B cell (primary cell): ENCODE measurements at regions of chr4 and their contacts with region 1.

Region 1: GRCh38 chr4:81427344-81427821 is 44.3 kb downstream of the RASGEF1B start:
- DNase-seq: no peak
- ATAC-seq: no peak
- H3K4me3 ChIP-seq: no peak overlapping the region
- H3K4me3 Mint-ChIP-seq: no peak overlapping the region
- H3K27ac ChIP-seq: no peak overlapping the region
- H3K27ac Mint-ChIP-seq: no peak overlapping the region
- H3K4me1 ChIP-seq: peaks cover 0 to 6% of the 10 kb centered on the region in 2 donors
- H3K4me1 Mint-ChIP-seq: peaks cover 12% of the 10 kb centered on the region
- H3K27me3 ChIP-seq: no peaks in the 10 kb centered on the region
- H3K27me3 Mint-ChIP-seq: no peaks in the 10 kb centered on the region
- CTCF ChIP-seq: no peak

Region 2: DNA sequence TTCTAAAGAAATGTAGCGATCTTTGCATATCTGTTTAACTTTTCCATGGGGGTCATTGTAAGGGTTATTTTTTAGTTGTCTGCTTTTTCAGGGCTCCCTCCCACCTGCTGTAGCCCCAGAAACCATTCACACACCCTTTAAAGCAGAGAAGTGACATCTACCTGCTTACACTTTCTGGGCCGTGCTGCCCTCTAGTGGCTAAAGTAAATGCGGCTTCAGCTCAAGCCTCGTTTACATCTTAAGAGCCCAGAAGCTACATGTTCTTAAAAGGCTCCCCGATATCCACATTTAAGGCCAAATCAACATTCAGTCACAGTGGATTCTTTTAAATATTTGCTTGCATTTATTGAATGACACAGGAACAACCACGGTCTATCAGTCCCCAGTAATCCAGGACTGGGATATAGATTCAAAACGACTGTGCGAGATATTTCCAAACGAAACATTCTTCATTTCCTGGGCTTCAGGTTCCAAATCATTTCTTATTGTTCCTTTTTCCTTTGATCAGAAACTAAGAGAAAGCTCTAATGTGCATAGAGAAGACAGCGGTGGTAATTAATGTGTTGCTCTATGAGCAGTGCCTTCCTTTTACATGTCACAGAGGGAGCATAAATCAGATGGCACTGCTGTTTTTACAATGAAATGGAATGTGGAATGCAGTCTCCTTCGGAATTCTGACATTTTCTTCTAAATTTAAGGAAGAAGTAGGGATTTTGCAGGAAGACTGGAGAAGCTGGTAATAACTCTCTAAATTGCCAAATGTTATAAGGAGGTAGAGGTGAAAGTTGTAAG is 75.5 kb before region 1 on chr4:
- CTCF ChIA-PET with region 1: no interaction called
- POLR2A ChIA-PET with region 1: no interaction called
- intact Hi-C with region 1: no loop called
- DNase-seq: peak; percentile 73
- ATAC-seq: peak; percentile 60
- H3K4me3 ChIP-seq: no peak overlapping the region
- H3K4me3 Mint-ChIP-seq: no peak overlapping the region
- H3K27ac ChIP-seq: no peak overlapping the region
- H3K27ac Mint-ChIP-seq: no peak overlapping the region
- H3K4me1 ChIP-seq: no peaks in the 10 kb centered on the region
- H3K4me1 Mint-ChIP-seq: no peaks in the 10 kb centered on the region
- H3K27me3 ChIP-seq: no peaks in the 10 kb centered on the region
- H3K27me3 Mint-ChIP-seq: peaks cover 14% of the 10 kb centered on the region
- CTCF ChIP-seq: peak; percentile 93

Region 3: DNA sequence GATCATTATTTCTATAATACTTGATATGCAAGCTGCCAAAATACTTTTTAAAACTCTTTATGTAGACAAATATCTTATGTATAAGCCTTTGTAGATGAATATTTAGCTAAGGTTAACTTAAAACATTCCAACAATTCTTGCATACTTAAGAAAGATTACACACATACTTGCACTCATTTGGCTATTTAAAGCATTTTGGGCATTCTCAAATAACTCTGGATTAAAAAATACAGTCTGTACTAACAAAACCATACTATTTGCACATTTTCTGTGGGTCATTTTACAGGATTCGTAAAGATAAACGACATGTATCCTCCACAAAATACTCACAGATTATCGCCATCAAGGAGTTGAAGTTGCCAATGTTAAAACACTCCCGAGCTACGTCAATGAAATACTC is 17.8 kb after region 1 on chr4:
- CTCF ChIA-PET with region 1: interaction called, 4 read pairs
- POLR2A ChIA-PET with region 1: no interaction called
- intact Hi-C with region 1: loop called (anchors 2 kb)
- DNase-seq: no peak
- ATAC-seq: no peak
- H3K4me3 ChIP-seq: no peak overlapping the region
- H3K4me3 Mint-ChIP-seq: no peak overlapping the region
- H3K27ac ChIP-seq: no peak overlapping the region
- H3K27ac Mint-ChIP-seq: no peak overlapping the region
- H3K4me1 ChIP-seq: no peaks in the 10 kb centered on the region
- H3K4me1 Mint-ChIP-seq: no peaks in the 10 kb centered on the region
- H3K27me3 ChIP-seq: no peaks in the 10 kb centered on the region
- H3K27me3 Mint-ChIP-seq: no peaks in the 10 kb centered on the region
- CTCF ChIP-seq: no peak

Region 4: DNA sequence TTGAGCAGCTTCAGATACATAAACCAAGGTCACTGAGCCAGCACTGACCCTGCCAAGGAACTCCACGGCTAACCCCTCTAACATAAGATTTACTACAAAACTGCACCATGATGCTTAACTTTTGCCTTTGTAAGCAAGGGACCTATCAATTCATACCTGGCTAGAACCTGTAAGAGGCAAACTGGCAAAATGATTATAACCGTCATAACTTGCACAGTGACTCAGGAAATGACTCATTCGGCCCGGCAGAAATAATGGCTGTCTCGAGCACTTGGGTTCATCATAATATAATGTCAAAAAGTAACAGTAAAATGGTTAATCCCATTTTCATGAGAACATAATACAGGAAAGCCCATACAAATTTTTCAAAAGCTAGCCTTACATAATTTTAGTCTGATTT is 27.1 kb after region 1 on chr4:
- CTCF ChIA-PET with region 1: interaction called, 3 read pairs
- POLR2A ChIA-PET with region 1: interaction called, 11 read pairs
- intact Hi-C with region 1: no loop called
- DNase-seq: no peak
- ATAC-seq: no peak
- H3K4me3 ChIP-seq: no peak overlapping the region
- H3K4me3 Mint-ChIP-seq: peak overlapping the region; percentile 40
- H3K27ac ChIP-seq: no peak overlapping the region
- H3K27ac Mint-ChIP-seq: peak overlapping the region; percentile 47
- H3K4me1 ChIP-seq: peaks cover 7 to 21% of the 10 kb centered on the region in 2 donors
- H3K4me1 Mint-ChIP-seq: peaks cover 55% of the 10 kb centered on the region
- H3K27me3 ChIP-seq: no peaks in the 10 kb centered on the region
- H3K27me3 Mint-ChIP-seq: no peaks in the 10 kb centered on the region
- CTCF ChIP-seq: no peak